ENCODE measurements at regions of chr9 and their contacts with region 1.

Region 1: GRCh38 chr9:129489838-129490582 is 130.9 kb downstream of the C9orf50 start:
- DNase-seq: no peak
- CTCF ChIP-seq: no peak

Region 2: GRCh38 chr9:129413537-129414376 is 76.3 kb before region 1 on chr9:
- CTCF ChIA-PET with region 1: no interaction called
- POLR2A ChIA-PET with region 1: interaction called, 10 read pairs
- DNase-seq: peak; percentile 99
- CTCF ChIP-seq: no peak

Region 3: GRCh38 chr9:129569502-129570449 is 79.8 kb after region 1 on chr9:
- CTCF ChIA-PET with region 1: no interaction called
- POLR2A ChIA-PET with region 1: no interaction called
- DNase-seq: no peak
- CTCF ChIP-seq: peak; percentile 20

Measured in GM10248 (cell line).